ENCODE measurements at regions of chr12 and their contacts with region 1.

Region 1: DNA sequence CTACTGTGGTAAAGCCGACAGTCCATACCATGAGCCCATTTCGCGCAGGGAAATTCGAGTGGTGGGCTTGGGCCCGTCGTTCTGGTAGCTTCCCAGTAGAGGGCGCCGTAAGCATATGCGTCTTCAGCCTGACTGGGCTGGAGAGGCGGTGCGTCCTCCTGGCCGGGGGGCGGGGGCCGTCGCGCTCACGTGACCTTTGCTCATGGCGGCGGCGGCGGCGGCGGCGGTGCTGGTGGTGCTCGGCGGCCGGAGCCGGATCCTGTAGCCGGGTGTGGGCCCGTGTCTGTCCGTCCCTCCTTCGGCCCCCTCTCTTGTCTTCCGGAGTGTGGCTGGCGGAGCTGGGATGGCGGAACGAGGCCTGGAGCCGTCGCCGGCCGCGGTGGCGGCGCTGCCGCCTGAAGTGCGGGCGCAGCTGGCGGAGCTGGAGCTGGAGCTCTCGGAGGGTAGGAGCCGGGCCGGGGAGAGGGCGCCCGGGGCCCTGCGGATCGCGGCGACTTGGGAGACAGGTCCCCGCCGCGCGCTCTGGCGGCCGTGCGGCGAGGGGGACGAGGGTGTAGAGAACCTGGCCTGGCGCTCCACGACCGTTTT is at the start of gene DIP2B:
- DNase-seq: peak; percentile 96 to 99
- H3K4me3 ChIP-seq: peak within 1 kb of the TSS; percentile 96
- H3K4me3 Mint-ChIP-seq: peak within 1 kb of the TSS; percentile 89
- H3K27ac Mint-ChIP-seq: peak within 1 kb of the TSS; percentile 79
- H3K4me1 ChIP-seq: peaks cover 32% of the 10 kb centered on the region
- H3K4me1 Mint-ChIP-seq: peaks cover 19% of the 10 kb centered on the region
- H3K27me3 ChIP-seq: no peaks in the 10 kb centered on the region
- H3K27me3 Mint-ChIP-seq: no peaks in the 10 kb centered on the region
- CTCF ChIP-seq: peak; percentile 95 to 96
- total RNA-seq, gene DIP2B: 32.7 and 34.2 TPM in 2 replicates

Region 2: DNA sequence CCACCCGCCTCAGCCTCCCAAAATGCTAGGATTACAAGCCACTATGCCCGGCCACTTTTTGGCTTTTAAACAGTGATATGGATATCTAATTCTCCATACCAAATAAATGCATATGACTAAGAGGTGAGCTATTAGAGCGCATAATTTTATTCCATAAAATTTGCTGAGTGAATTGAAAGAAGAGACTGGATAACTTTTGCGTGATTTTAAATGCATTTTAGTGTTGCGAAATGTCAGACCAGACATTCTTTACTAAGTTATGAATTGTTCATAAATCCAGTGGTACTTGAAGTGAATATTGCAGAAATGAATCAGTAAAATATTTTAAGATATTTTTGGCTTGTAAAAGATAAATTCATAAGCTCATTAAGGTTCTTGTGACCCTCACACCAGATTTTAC is 51.0 kb before region 1 on chr12:
- CTCF ChIA-PET with region 1: no interaction called
- POLR2A ChIA-PET with region 1: no interaction called
- intact Hi-C with region 1: no loop called
- DNase-seq: no peak
- H3K4me3 ChIP-seq: no peak overlapping the region
- H3K4me3 Mint-ChIP-seq: no peak overlapping the region
- H3K27ac Mint-ChIP-seq: no peak overlapping the region
- H3K4me1 ChIP-seq: no peaks in the 10 kb centered on the region
- H3K4me1 Mint-ChIP-seq: no peaks in the 10 kb centered on the region
- H3K27me3 ChIP-seq: no peaks in the 10 kb centered on the region
- H3K27me3 Mint-ChIP-seq: no peaks in the 10 kb centered on the region
- CTCF ChIP-seq: no peak

Region 3: DNA sequence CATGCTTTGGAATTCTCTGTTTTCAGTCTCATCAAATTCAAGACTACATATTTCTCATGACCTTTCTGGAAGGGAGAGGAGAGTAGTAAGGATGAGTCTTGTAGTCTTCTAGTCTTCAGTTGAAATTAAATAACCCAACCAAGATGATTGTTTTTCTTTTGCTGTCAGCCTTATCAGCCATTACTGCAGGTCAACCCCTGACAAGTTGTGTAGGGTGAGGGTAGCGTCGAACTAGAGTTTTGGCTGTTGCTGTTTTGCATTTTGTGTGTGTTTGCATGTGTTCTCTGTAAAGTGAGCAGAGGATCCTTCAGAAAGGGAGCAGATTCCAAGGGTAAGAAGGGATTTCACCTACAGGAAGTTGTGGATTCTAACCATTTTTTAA is 28.3 kb after region 1 on chr12:
- CTCF ChIA-PET with region 1: interaction called, 5 read pairs
- POLR2A ChIA-PET with region 1: no interaction called
- intact Hi-C with region 1: loop called (anchors 1 kb)
- DNase-seq: no peak
- H3K4me3 ChIP-seq: no peak overlapping the region
- H3K4me3 Mint-ChIP-seq: no peak overlapping the region
- H3K27ac Mint-ChIP-seq: no peak overlapping the region
- H3K4me1 ChIP-seq: peaks cover 54% of the 10 kb centered on the region
- H3K4me1 Mint-ChIP-seq: peaks cover 22% of the 10 kb centered on the region
- H3K27me3 ChIP-seq: no peaks in the 10 kb centered on the region
- H3K27me3 Mint-ChIP-seq: no peaks in the 10 kb centered on the region
- CTCF ChIP-seq: no peak

Region 4: DNA sequence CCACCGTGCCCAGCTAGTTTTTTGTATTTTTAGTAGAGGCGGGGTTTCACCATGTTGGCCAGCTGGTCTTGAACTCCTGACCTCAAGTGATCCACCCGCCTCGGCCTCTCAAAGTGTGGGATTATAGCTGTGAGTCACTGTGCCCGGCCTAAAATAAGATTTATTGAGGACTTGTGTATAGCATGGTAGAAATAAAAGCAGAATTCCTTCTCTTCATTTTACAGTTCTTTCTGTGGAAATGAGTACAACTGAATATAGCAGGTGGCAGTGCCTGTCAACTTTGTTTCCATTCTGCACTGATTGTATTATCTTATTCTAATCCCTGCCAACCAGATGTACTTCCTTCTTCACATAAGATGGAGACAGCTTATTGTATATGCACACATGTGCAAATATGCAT is 40.9 kb after region 1 on chr12:
- CTCF ChIA-PET with region 1: interaction called, 5 read pairs
- POLR2A ChIA-PET with region 1: no interaction called
- intact Hi-C with region 1: loop called (anchors 5 kb)
- DNase-seq: no peak
- H3K4me3 ChIP-seq: no peak overlapping the region
- H3K4me3 Mint-ChIP-seq: no peak overlapping the region
- H3K27ac Mint-ChIP-seq: peak overlapping the region; percentile 66
- H3K4me1 ChIP-seq: peaks cover 54% of the 10 kb centered on the region
- H3K4me1 Mint-ChIP-seq: peaks cover 22% of the 10 kb centered on the region
- H3K27me3 ChIP-seq: no peaks in the 10 kb centered on the region
- H3K27me3 Mint-ChIP-seq: no peaks in the 10 kb centered on the region
- CTCF ChIP-seq: no peak

Region 5: GRCh38 chr12:50637870-50638481 is 133.1 kb after region 1 on chr12:
- CTCF ChIA-PET with region 1: interaction called, 33 read pairs
- POLR2A ChIA-PET with region 1: no interaction called
- intact Hi-C with region 1: loop called (anchors 1 kb)
- DNase-seq: peak in 1 of 2 experiments; percentile 37
- H3K4me3 ChIP-seq: no peak overlapping the region
- H3K4me3 Mint-ChIP-seq: no peak overlapping the region
- H3K27ac Mint-ChIP-seq: peak overlapping the region; percentile 74
- H3K4me1 ChIP-seq: peaks cover 51% of the 10 kb centered on the region
- H3K4me1 Mint-ChIP-seq: peaks cover 57% of the 10 kb centered on the region
- H3K27me3 ChIP-seq: no peaks in the 10 kb centered on the region
- H3K27me3 Mint-ChIP-seq: no peaks in the 10 kb centered on the region
- CTCF ChIP-seq: peak; percentile 73 to 83

Region 6: DNA sequence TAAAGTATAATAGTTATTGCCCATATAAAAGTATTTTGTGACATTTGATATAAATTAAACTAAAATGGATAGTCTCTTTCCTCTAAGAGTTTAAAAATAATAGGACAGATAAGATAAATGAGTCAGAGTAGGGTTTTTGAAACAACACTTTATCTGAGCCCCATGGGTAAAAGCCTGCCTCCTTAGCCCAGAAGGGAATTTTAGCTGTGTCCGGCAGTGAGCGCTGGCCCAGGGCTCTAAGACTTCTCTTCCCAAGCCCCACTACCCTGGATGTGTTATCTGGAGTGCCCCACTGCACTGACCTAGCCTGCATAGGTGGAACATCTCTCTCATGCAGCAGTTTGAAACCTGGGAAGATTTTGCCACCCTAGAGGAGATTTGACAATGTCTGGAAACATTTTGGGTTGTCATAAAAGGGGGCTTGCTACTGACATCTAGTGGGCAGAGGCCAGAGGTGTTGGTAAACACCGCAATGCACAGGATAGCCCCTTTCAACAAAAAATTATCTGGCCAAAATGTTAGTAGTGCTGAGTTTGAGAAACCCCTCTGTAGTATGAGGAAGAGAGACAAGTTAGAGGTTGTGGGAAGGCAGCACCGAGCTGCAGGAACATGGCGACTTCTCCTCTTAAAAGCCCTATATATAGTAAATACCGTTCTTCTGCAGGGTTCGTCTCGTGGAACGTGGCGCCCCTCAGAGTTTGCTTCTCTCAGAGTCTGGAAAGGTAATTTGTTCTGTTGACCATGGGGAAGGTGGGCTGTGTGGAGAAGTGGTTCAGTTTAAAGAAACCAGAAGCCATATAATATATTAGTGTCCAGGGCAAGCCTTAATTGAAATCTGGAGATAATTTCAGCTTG is 229.7 kb after region 1 on chr12:
- CTCF ChIA-PET with region 1: interaction called, 5 read pairs
- POLR2A ChIA-PET with region 1: no interaction called
- intact Hi-C with region 1: loop called (anchors 1 kb)
- DNase-seq: peak in 1 of 2 experiments; percentile 54
- H3K4me3 ChIP-seq: no peak overlapping the region
- H3K4me3 Mint-ChIP-seq: no peak overlapping the region
- H3K27ac Mint-ChIP-seq: no peak overlapping the region
- H3K4me1 ChIP-seq: peaks cover 8% of the 10 kb centered on the region; the same call in 1 of the 2 replicates
- H3K4me1 Mint-ChIP-seq: peaks cover 6% of the 10 kb centered on the region
- H3K27me3 ChIP-seq: no peaks in the 10 kb centered on the region
- H3K27me3 Mint-ChIP-seq: no peaks in the 10 kb centered on the region
- CTCF ChIP-seq: peak; percentile 67 to 89

Region 7: DNA sequence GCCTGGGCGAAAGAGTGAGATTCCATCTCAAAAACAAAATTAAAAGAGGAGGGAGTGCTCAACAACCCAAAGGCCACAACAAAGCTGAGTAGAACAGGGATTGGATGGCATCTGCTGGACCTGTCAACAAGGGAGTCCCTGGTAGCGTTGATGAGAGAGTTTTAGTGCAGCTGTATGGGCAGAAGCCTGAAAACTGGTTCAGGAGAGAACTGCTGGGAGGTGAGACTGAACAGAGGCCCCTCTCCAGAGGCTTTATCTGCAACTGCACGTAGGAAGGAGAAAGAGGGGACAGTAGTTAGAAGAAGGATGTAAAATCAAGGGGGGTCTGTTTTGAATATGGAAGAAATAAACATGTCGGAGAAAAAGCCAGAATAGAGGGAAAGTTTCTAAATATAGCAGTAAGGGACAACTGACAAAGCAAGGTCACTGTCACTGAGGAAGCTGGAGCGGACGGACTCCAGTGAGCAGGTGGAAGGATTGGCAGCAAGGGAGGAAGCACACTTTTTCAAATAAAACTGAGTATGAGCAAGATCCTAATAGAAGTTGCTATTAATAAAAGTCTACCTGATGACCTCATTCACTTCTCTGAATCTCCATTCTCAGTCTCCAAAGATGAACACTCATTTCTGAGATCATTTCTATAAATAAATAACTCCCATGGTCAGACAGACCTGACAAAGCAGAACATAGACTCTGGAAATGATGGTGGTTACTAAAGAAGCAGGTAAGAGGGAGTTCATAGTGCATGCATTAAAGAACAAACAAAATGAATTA is 247.2 kb after region 1 on chr12:
- CTCF ChIA-PET with region 1: no interaction called
- POLR2A ChIA-PET with region 1: no interaction called
- intact Hi-C with region 1: no loop called
- DNase-seq: no peak
- H3K4me3 ChIP-seq: no peak overlapping the region
- H3K4me3 Mint-ChIP-seq: no peak overlapping the region
- H3K27ac Mint-ChIP-seq: peak overlapping the region; percentile 14
- H3K4me1 ChIP-seq: peaks cover 37% of the 10 kb centered on the region
- H3K4me1 Mint-ChIP-seq: peaks cover 21% of the 10 kb centered on the region
- H3K27me3 ChIP-seq: no peaks in the 10 kb centered on the region
- H3K27me3 Mint-ChIP-seq: no peaks in the 10 kb centered on the region
- CTCF ChIP-seq: no peak

Region 8: GRCh38 chr12:50862316-50862715 is 357.4 kb after region 1 on chr12:
- CTCF ChIA-PET with region 1: no interaction called
- POLR2A ChIA-PET with region 1: no interaction called
- intact Hi-C with region 1: no loop called
- DNase-seq: no peak
- H3K4me3 ChIP-seq: no peak overlapping the region
- H3K4me3 Mint-ChIP-seq: no peak overlapping the region
- H3K27ac Mint-ChIP-seq: no peak overlapping the region
- H3K4me1 ChIP-seq: no peaks in the 10 kb centered on the region
- H3K4me1 Mint-ChIP-seq: no peaks in the 10 kb centered on the region
- H3K27me3 ChIP-seq: no peaks in the 10 kb centered on the region
- H3K27me3 Mint-ChIP-seq: peaks cover 3% of the 10 kb centered on the region
- CTCF ChIP-seq: no peak